ENCODE measurements at regions of chr1 and their contacts with region 1.

Region 1: GRCh38 chr1:32773018-32773763 is 44.0 kb downstream of the YARS1 start:
- DNase-seq: peak; percentile 86
- ATAC-seq: peak; percentile 82
- H3K4me3 Mint-ChIP-seq: no peak overlapping the region
- H3K27ac Mint-ChIP-seq: peak overlapping the region; percentile 19
- H3K4me1 Mint-ChIP-seq: peaks cover 16% of the 10 kb centered on the region
- H3K27me3 Mint-ChIP-seq: no peaks in the 10 kb centered on the region
- CTCF ChIP-seq: peak; percentile 92

Region 2: DNA sequence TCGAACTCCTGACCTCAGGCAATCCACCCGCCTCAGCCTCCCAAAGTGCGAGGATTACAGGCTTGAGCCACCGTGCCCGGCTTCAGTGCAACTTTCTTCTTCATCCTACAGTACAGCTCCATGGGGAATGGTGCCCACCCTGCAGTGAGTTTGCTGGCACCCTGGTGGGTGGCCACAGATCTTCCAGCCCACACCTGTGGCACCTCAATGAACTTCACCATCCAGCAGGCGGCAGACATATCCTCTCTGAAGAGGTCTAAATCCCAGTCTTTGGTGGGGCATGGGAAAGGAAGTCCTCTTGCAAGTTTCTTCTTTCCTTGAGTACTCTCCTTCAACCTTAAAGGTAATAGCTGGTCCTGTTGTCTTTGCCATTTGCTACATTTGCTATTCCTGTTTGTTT is 252.0 kb before region 1 on chr1:
- CTCF ChIA-PET with region 1: interaction called, 33 read pairs
- POLR2A ChIA-PET with region 1: no interaction called
- intact Hi-C with region 1: no loop called
- DNase-seq: no peak
- ATAC-seq: no peak
- H3K4me3 Mint-ChIP-seq: peak overlapping the region; percentile 67
- H3K27ac Mint-ChIP-seq: no peak overlapping the region
- H3K4me1 Mint-ChIP-seq: peaks cover 2% of the 10 kb centered on the region
- H3K27me3 Mint-ChIP-seq: peaks cover 5% of the 10 kb centered on the region
- CTCF ChIP-seq: no peak

Region 3: DNA sequence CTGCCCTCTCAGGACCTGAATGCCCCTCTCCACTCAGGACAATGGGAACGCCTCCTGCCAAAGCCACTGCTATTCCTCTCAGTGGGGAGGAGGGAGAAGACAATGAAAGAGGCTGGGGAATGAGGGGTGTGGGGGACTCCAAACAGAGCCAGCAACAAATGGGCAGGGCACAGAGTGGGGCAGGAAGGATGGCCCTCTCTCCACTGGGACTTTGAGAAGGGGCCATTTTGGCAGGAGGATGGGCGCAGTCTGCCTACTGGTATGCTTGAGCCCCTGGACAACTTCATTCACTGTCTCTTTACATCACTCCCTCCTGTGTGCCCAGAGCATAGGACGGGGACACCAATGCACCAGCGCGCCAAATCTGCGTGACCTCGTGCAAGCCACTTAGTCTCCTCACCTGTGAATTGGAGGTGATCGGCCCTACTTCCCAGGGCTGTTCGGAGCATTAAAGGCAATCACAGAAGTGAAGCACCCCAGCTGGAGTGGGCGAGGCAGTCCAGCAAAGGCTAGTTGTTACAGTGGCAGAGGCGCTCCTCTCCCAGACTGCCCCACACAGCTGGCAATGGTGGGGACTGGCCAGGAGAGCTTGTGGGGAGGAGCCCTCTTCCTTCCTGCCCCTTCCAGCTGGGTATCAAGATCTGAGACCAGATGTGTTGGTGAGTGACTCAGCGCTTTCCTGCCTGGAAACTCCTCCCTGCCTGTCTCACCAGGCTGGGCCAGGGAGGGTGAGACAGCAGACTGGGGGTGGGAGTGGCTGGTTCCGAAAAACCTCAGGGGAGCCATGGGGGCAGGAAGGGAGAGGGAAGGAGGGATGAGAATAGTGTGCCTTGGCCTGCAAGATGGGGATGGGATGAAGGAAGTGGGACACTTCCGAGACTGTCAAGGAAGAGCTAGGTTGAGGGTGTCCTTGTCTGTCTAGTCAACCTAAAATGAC is 48.2 kb before region 1 on chr1:
- CTCF ChIA-PET with region 1: interaction called, 26 read pairs
- POLR2A ChIA-PET with region 1: no interaction called
- intact Hi-C with region 1: no loop called
- DNase-seq: peak; percentile 34
- ATAC-seq: peak; percentile 61
- H3K4me3 Mint-ChIP-seq: no peak overlapping the region
- H3K27ac Mint-ChIP-seq: no peak overlapping the region
- H3K4me1 Mint-ChIP-seq: peaks cover 7% of the 10 kb centered on the region
- H3K27me3 Mint-ChIP-seq: peaks cover 6% of the 10 kb centered on the region
- CTCF ChIP-seq: no peak

Region 4: GRCh38 chr1:32761253-32761880 is 11.8 kb before region 1 on chr1:
- CTCF ChIA-PET with region 1: interaction called, 36 read pairs
- POLR2A ChIA-PET with region 1: interaction called, 8 read pairs
- intact Hi-C with region 1: no loop called
- DNase-seq: peak; percentile 81
- ATAC-seq: peak; percentile 81
- H3K4me3 Mint-ChIP-seq: no peak overlapping the region
- H3K27ac Mint-ChIP-seq: peak overlapping the region; percentile 63
- H3K4me1 Mint-ChIP-seq: peaks cover 26% of the 10 kb centered on the region
- H3K27me3 Mint-ChIP-seq: no peaks in the 10 kb centered on the region
- CTCF ChIP-seq: no peak

Region 5: GRCh38 chr1:32876341-32877210 is 103.4 kb after region 1 on chr1:
- CTCF ChIA-PET with region 1: interaction called, 17 read pairs
- POLR2A ChIA-PET with region 1: interaction called, 3 read pairs
- intact Hi-C with region 1: no loop called
- DNase-seq: peak; percentile 74
- ATAC-seq: peak; percentile 84
- H3K4me3 Mint-ChIP-seq: no peak overlapping the region
- H3K27ac Mint-ChIP-seq: no peak overlapping the region
- H3K4me1 Mint-ChIP-seq: peaks cover 3% of the 10 kb centered on the region
- H3K27me3 Mint-ChIP-seq: peaks cover 35% of the 10 kb centered on the region
- CTCF ChIP-seq: peak; percentile 90

Measured in activated CD8-positive, alpha-beta T cell treated with anti-CD3 and anti-CD28 coated beads for 36 hours (primary cell).